ENCODE measurements at regions of chr1 and their contacts with region 1.

Region 1: DNA sequence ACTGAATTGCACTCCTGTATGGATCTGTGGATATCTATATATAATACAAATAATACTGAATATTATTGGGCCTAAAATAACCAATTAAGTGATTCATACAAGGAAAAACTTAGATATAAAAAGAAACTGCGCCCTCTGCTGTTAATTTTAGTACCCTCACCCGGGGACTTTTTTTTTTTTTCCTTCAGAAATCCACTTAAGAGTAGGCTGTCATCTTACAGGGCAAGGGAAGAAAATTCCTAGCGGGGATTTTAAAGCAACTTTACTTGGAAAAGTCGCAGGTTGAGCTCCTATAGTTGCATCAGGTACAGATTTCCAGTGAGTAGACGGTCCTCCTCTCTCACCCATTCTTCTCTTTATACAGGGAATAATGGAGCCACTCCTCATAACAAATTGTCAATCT is 1.3 kb downstream of the NTNG1 start:
- DNase-seq: peak; percentile 89
- H3K4me3 ChIP-seq: peak overlapping the region; percentile 92
- H3K27ac ChIP-seq: peak overlapping the region; percentile 91
- H3K4me1 ChIP-seq: peaks cover 41% of the 10 kb centered on the region
- H3K27me3 ChIP-seq: no peaks in the 10 kb centered on the region
- CTCF ChIP-seq: peak; percentile 77

Region 2: DNA sequence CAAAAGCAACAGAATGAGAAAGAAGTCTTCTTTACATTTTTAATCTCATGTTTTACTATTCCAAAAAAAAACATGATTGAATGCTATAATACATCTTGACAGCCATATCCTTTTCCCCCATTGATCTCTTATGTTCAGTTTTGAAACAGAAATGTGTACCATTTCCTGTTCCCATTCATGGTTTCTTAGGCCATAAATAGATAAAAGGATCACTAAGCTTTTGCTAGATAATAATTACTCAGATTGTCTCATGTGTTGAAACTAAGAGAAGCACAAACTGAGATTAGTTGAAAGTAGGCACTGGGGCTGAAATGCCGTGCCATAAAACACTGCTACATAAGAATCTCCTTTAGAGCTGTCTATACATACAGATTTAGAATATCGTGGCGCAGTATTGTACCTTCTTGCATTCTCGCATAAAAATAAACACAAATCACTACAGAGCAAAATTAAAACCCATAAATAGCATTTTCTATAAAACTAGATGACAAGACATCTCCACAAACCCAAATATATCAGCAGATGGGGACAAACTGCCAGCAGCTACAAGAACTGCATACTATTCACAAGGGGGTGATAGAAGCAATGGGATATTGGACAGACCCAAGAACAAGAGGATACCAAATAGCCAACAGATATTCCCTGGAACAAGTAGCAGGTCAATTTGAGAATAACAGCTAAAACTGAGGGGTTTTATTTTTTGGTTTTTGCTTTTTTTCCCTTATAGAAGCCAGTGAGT is 490.9 kb before region 1 on chr1:
- CTCF ChIA-PET with region 1: no interaction called
- POLR2A ChIA-PET with region 1: no interaction called
- intact Hi-C with region 1: loop called (anchors 10 kb)
- DNase-seq: peak; percentile 88
- H3K4me3 ChIP-seq: peak overlapping the region; percentile 12
- H3K27ac ChIP-seq: peak overlapping the region; percentile 53
- H3K4me1 ChIP-seq: peaks cover 34% of the 10 kb centered on the region
- H3K27me3 ChIP-seq: no peaks in the 10 kb centered on the region
- CTCF ChIP-seq: peak; percentile 55; the same call in 1 of the 2 replicates

Region 3: DNA sequence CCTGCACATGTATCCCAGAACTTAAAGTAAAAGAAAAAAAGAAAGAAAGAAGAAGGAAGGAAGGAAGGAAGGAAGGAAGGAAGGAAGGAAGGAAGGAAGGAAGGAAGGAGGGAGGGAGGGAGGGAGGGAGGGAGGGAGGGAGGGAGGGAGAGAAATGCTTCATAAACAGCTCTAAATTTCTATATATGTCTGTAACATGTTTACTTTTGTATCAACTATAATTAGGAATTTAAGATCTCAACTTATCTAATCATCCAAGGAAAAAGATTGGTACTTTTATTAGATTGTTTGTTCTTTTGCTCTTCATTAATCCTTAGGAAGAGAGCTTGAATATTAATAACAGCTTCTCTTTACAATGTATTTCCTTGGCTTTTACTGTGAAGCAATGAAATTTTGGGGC is 281.0 kb before region 1 on chr1:
- CTCF ChIA-PET with region 1: no interaction called
- POLR2A ChIA-PET with region 1: no interaction called
- intact Hi-C with region 1: loop called (anchors 5 kb)
- DNase-seq: peak; percentile 55
- H3K4me3 ChIP-seq: no peak overlapping the region
- H3K27ac ChIP-seq: peak overlapping the region; percentile 88
- H3K4me1 ChIP-seq: peaks cover 10% of the 10 kb centered on the region
- H3K27me3 ChIP-seq: no peaks in the 10 kb centered on the region
- CTCF ChIP-seq: no peak

Region 4: DNA sequence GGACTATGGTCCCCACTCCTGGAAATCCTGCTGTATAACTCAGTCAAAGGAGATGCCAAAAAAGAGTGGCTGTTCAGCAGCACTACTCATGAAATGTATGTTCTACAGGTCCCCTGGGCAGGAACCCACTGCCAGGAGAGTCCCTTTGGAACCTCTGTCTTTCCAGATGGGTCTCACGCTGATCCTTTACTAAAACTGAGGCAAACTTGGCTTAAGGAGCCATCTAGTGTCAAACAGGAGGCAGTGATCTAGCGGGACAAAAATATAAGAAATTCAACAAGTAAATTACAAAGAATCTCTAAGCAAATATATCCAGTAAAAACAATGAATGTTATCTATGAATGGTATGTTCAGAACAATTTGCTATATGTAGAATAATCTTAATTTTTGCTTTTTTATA is 166.2 kb before region 1 on chr1:
- CTCF ChIA-PET with region 1: no interaction called
- POLR2A ChIA-PET with region 1: no interaction called
- intact Hi-C with region 1: loop called (anchors 5 kb)
- DNase-seq: peak; percentile 49
- H3K4me3 ChIP-seq: no peak overlapping the region
- H3K27ac ChIP-seq: no peak overlapping the region
- H3K4me1 ChIP-seq: peaks cover 30% of the 10 kb centered on the region
- H3K27me3 ChIP-seq: no peaks in the 10 kb centered on the region
- CTCF ChIP-seq: peak; percentile 42; the same call in 1 of the 2 replicates

Region 5: GRCh38 chr1:107171333-107171732 is 29.2 kb after region 1 on chr1:
- CTCF ChIA-PET with region 1: interaction called, 4 read pairs
- POLR2A ChIA-PET with region 1: interaction called, 13 read pairs
- intact Hi-C with region 1: no loop called
- DNase-seq: peak; percentile 85
- H3K4me3 ChIP-seq: no peak overlapping the region
- H3K27ac ChIP-seq: peak overlapping the region; percentile 76
- H3K4me1 ChIP-seq: peaks cover 97% of the 10 kb centered on the region
- H3K27me3 ChIP-seq: no peaks in the 10 kb centered on the region
- CTCF ChIP-seq: no peak

Region 6: DNA sequence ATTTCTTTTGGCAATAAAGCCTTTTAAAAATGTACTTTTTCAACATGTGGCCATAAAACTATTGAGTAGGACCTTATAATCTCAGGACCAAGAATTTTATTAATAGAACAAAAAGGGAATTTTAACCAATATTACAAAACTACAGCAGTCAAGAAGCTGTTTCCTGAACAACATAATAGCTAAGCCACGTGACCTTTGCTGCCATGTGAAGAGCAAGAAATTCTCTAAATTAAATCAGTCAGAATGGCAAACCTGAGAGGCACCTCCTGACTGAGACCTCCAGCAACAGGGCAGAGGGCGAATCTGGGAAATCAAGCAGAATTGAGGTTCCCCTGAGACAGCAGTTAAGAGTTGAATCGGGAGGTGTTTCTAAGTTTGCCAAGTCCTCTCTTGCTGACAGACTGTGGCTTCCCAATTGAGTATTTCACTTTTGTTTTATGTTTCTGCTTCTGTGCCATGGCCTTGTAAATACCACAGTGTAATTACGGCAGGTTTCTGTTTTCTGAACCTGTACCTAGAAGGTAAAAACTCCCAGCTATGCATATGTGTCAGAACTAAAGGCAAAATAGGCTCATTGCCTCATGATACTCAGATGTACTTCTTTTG is 357.1 kb after region 1 on chr1:
- CTCF ChIA-PET with region 1: no interaction called
- POLR2A ChIA-PET with region 1: no interaction called
- intact Hi-C with region 1: no loop called
- DNase-seq: no peak
- H3K4me3 ChIP-seq: no peak overlapping the region
- H3K27ac ChIP-seq: no peak overlapping the region
- H3K4me1 ChIP-seq: no peaks in the 10 kb centered on the region
- H3K27me3 ChIP-seq: no peaks in the 10 kb centered on the region
- CTCF ChIP-seq: no peak

Region 7: GRCh38 chr1:107529502-107530149 is 387.5 kb after region 1 on chr1:
- CTCF ChIA-PET with region 1: no interaction called
- POLR2A ChIA-PET with region 1: no interaction called
- intact Hi-C with region 1: loop called (anchors 5 kb)
- DNase-seq: peak; percentile 87
- H3K4me3 ChIP-seq: no peak overlapping the region
- H3K27ac ChIP-seq: no peak overlapping the region
- H3K4me1 ChIP-seq: peaks cover 17% of the 10 kb centered on the region
- H3K27me3 ChIP-seq: no peaks in the 10 kb centered on the region
- CTCF ChIP-seq: peak; percentile 93

Measured in A673 (cell line).